Heart left ventricle (tissue), 16 donors: ENCODE measurements at regions of chr19 and their contacts with region 1.

Region 1: DNA sequence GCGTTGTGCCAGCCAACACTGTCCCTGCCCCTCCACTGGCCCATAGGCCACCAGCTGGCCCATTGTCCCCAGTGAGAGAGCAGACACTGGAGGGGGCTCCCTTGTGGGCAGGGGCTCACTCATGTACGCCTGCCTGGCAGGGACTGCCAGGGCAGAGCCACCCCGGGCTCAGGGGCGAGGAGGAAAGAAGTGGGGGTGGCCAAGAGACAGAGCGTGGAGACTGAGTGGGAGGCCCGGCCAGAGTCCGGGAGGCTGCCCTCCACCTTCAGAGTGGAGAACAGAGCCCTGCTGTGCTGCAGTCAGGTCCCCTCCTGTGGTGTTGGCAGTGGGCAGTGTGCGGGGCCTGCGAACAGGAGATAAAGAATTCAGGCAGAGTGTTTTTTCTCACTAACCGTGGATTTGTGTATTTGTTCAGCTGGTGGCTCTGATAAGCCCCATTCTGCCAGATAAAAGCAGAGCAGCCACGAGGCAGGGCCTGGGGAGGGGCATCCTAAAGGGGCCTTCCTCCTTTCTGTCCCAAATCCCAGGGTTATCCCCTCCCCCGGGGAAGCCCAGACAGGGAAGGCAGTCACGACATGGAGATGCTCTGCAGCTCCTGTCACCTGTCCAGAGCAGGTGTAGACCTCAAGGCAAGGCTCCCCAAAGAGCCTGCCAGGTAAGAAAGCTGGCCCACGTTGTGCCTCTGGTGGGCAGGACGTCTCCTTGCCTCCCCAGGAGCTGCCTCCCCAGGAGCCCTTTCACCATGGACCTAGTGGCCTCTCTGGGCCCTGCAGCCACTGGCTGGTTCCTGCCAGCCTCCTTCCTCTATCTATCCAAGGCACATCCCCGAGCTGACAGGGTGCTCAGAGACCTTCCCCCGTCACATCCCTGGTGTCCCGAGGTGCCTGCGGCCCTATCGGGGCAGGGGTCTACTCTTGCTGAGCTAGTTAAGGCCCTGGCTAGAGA is 33.0 kb downstream of the LYL1 start:
- DNase-seq: no peak
- ATAC-seq: no peak
- H3K4me3 ChIP-seq: peak overlapping the region in 6 of 12 donors; percentile 4 to 33 (median 14)
- H3K27ac ChIP-seq: peak overlapping the region; percentile 61 to 98 (median 80)
- H3K4me1 ChIP-seq: peaks cover 43 to 85% (median 74%) of the 10 kb centered on the region in 12 donors
- H3K27me3 ChIP-seq: no peaks in the 10 kb centered on the region
- CTCF ChIP-seq: no peak
- POLR2A ChIP-seq: no peak

Region 2: GRCh38 chr19:12933287-12934072 is 136.2 kb before region 1 on chr19 and contains the start of gene FARSA:
- intact Hi-C with region 1: no loop called
- DNase-seq: peak; percentile 93 to 95 (median 94)
- ATAC-seq: peak; percentile 65 to 88 (median 84)
- H3K4me3 ChIP-seq: peak within 1 kb of the TSS; percentile 72 to 100 (median 88)
- H3K27ac ChIP-seq: peak within 1 kb of the TSS; percentile 54 to 92 (median 85)
- H3K4me1 ChIP-seq: peaks cover 6 to 35% (median 20%) of the 10 kb centered on the region in 12 donors
- H3K27me3 ChIP-seq: no peaks in the 10 kb centered on the region
- CTCF ChIP-seq: no peak
- POLR2A ChIP-seq: peak in 1 of 2 donors; percentile 57
- total RNA-seq, gene FARSA: 35.0 to 49.6 (median 40.6) TPM

Region 3: DNA sequence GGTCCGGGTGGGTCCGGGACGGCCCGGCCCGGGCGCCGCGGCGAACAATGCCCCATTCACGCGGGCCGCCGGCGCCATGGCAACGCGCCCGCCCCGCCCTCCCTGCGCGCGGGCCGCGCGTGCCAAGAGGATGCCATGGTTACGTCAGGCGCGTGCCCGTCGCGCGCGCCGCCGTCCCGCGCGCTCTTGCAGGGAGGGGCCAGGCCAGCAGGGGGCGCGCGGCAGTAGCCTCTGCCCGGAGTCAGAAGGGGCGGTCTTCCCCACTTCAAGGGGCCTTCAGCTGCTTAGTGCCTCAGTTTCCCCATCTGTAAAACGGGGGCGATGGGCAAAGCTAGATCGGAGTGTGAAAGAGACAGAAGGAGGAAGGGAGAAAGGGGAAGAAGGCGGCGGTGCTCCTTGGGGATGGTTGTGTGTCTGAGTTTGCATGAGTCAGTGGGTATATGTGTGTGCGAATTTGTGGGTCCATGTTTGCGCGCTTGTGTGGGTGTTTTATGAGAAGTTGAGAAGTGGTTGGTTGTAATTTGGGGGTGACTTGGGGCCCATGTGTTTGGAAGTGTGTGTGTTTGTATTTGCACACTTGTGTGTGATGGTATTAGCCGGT is 86.0 kb before region 1 on chr19:
- intact Hi-C with region 1: loop called in 3 of 10 experiments (anchors 1 to 5 kb)
- DNase-seq: peak; percentile 73 to 92 (median 83)
- ATAC-seq: peak; percentile 30 to 83 (median 78)
- H3K4me3 ChIP-seq: peak overlapping the region in 10 of 12 donors; percentile 26 to 50 (median 42)
- H3K27ac ChIP-seq: peak overlapping the region in 1 of 12 donors; percentile 47
- H3K4me1 ChIP-seq: peaks cover 0 to 28% (median 15%) of the 10 kb centered on the region in 12 donors
- H3K27me3 ChIP-seq: peaks cover 0 to 5% (median 0%) of the 10 kb centered on the region in 9 donors
- CTCF ChIP-seq: peak; percentile 76 to 99 (median 97)
- POLR2A ChIP-seq: peak in 1 of 2 donors; percentile 27